Calu3 (cell line): ENCODE measurements at regions of chr6 and their contacts with region 1.

Region 1: GRCh38 chr6:37990762-37991525 is 171.4 kb downstream of the ZFAND3 start:
- DNase-seq: no peak
- H3K4me3 Mint-ChIP-seq: no peak overlapping the region
- H3K27ac Mint-ChIP-seq: no peak overlapping the region
- H3K4me1 Mint-ChIP-seq: peaks cover 10% of the 10 kb centered on the region
- H3K27me3 Mint-ChIP-seq: no peaks in the 10 kb centered on the region
- CTCF ChIP-seq: no peak

Region 2: GRCh38 chr6:37698261-37699137 is 292.4 kb before region 1 on chr6:
- CTCF ChIA-PET with region 1: interaction called, 11 read pairs
- intact Hi-C with region 1: no loop called
- DNase-seq: peak; percentile 67
- H3K4me3 Mint-ChIP-seq: peak overlapping the region; percentile 81
- H3K27ac Mint-ChIP-seq: peak overlapping the region; percentile 75
- H3K4me1 Mint-ChIP-seq: peaks cover 25% of the 10 kb centered on the region
- H3K27me3 Mint-ChIP-seq: peaks cover 85% of the 10 kb centered on the region
- CTCF ChIP-seq: no peak

Region 3: GRCh38 chr6:37807656-37808055 is 183.3 kb before region 1 on chr6:
- CTCF ChIA-PET with region 1: interaction called, 11 read pairs
- intact Hi-C with region 1: no loop called
- DNase-seq: no peak
- H3K4me3 Mint-ChIP-seq: no peak overlapping the region
- H3K27ac Mint-ChIP-seq: no peak overlapping the region
- H3K4me1 Mint-ChIP-seq: peaks cover 20% of the 10 kb centered on the region
- H3K27me3 Mint-ChIP-seq: peaks cover 23% of the 10 kb centered on the region
- CTCF ChIP-seq: no peak

Region 4: DNA sequence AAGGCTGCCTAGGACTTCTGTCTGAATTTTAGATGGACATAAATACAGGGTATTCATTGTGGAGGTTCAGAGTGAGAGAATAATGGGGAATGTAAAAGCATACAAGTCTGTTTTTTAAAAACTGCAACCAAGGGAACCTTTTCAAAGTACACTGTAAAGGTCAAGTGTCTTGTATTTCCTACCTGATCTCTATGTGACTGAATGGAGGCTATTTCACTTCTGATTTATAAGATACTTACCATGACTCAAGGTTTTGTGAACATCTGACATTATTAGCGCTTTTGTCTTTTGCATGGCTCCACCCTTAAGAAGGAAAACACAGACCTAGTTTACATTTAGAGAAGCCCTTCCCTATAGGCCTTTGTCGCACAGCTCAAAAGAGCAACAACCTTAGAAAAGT is 44.9 kb before region 1 on chr6:
- CTCF ChIA-PET with region 1: no interaction called
- intact Hi-C with region 1: no loop called
- DNase-seq: no peak
- H3K4me3 Mint-ChIP-seq: no peak overlapping the region
- H3K27ac Mint-ChIP-seq: no peak overlapping the region
- H3K4me1 Mint-ChIP-seq: peaks cover 25% of the 10 kb centered on the region
- H3K27me3 Mint-ChIP-seq: no peaks in the 10 kb centered on the region
- CTCF ChIP-seq: no peak

Region 5: DNA sequence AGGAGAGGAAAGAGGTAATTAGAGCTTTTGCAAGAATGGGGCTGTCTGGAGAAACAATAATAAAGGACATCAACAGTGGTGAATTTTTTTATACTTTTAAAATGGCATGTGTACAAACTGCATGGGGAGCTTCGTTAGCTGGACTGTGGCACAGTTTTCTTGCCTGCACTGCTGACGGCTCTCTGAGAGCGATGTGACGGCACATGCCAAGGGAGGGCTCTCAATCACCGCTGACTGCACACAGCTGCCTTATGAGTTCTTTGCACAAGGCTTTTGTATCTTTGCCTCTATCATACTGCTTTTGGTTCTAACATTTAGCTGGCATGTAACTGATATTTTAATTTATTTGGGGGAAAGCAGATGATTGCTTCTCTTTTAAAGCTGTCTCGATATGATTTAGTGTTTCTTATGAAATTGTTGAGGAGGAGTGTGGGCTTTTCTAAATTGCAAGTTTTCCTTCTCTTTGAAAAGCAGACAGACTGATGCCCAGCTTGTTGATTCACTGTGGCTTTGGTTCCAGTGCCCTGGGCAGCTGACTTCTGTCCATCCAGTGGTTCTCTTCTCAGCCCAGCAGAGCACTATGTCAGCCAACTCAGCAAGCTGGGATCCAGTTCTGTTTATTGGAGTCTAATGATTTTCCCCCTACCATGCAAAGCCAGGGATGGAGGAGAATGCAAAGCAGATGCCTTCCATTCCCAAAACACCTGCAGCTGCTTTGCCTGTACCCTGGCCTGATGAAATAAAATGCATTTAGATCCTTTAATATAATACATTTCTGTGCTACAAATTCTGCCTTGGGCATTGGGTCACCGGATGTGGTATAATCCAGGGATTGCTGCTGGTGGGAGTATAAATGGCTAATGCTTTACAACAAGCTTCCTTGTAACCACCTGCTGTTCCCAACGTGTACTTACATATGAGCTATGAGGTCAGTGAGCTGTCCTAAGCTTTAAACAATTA is 152.5 kb after region 1 on chr6:
- CTCF ChIA-PET with region 1: no interaction called
- intact Hi-C with region 1: no loop called
- DNase-seq: no peak
- H3K4me3 Mint-ChIP-seq: no peak overlapping the region
- H3K27ac Mint-ChIP-seq: no peak overlapping the region
- H3K4me1 Mint-ChIP-seq: peaks cover 13% of the 10 kb centered on the region
- H3K27me3 Mint-ChIP-seq: no peaks in the 10 kb centered on the region
- CTCF ChIP-seq: no peak

Region 6: GRCh38 chr6:38169977-38170526 is 179.1 kb after region 1 on chr6:
- CTCF ChIA-PET with region 1: no interaction called
- intact Hi-C with region 1: no loop called
- DNase-seq: no peak
- H3K4me3 Mint-ChIP-seq: no peak overlapping the region
- H3K27ac Mint-ChIP-seq: no peak overlapping the region
- H3K4me1 Mint-ChIP-seq: no peaks in the 10 kb centered on the region
- H3K27me3 Mint-ChIP-seq: no peaks in the 10 kb centered on the region
- CTCF ChIP-seq: no peak